ENCODE measurements at regions of chr1 and their contacts with region 1.

Region 1: DNA sequence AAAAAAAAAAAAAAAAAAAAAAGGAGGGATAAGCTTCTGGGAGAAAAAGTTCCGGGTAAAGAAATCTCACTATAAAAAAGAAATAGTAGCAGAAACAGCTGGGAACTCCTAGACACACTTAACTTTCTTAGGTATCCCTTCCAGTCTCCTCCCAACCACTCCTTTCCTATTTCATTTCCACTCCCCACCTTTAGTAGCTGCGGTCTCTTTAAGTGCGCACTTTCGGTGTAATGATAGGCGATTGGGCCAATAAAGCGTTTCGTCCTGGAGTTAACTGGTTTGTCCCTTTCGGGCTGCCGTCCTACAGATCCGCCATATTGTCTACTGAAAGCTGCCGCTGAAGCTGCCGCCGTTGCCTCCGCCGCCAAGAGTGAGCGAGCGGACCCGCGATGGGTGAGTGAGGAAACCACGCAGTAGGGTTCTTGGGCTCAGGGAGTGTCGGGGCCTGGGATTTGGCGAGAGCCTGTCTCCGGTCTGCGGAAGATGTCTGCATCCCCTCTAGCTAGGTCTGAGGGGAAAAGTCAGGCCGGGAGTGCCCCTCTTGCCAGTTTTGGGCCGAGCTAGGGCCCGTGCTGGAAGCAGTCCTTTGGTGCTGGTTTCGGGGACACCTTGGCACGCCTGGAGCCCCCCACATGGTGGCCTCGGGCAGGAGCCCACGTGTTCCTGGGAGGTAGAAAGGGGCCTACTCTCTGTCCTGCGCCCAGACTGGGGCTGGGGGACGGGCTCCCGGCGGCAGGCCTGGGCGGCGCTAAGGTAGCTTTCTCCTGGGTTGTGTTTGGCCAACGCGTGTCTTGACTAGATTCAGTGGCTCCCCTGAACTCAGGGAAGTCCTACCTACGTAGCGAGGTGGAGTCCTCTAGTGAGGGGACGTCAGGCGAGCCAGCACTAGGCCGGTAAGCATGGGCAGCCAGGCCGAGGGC is at the start of gene KPNA6:
- DNase-seq: peak; percentile 95
- ATAC-seq: peak; percentile 80
- H3K4me3 Mint-ChIP-seq: peak within 1 kb of the TSS; percentile 98
- H3K27ac Mint-ChIP-seq: peak within 1 kb of the TSS; percentile 98
- H3K4me1 Mint-ChIP-seq: peaks cover 40% of the 10 kb centered on the region
- H3K27me3 Mint-ChIP-seq: no peaks in the 10 kb centered on the region
- total RNA-seq, gene KPNA6: 65.7 to 67.2 TPM

Region 2: DNA sequence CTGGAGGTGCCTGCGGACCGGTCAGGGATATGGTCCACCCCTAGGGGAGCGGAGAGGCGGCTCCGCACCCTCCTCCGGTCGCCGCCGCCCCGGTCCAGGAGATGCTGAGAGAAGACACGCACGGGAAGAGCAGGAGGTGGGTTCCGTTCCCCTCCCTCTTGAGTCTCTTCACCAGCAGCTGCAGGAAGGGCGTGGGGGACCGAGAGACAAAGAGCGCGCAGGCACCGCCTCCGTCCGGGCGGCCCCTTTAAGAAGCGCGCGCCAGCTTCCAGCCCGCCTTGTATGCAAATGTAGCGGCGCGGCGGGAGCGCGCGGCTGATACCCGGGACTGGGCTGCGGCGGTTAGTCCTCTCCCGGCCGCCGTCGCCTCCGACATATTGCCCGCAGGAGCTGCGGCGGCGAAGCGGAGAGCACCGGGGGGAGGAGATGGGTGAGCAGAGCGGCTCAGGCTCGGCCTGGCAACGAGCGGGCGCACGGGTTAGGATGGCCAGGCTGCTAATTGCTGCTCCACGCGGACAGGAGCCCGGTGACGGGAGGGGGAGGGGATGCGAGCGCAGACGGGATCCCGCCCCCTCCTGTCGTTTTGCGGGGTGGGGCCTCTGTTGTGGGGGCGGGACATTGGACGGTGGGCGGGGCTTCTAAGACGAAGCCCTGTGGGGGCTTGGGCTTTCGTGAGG is 35.2 kb before region 1 on chr1 and contains the start of gene TMEM39B:
- CTCF ChIA-PET with region 1: interaction called, 21 read pairs
- POLR2A ChIA-PET with region 1: interaction called, 28 read pairs
- DNase-seq: peak; percentile 97
- ATAC-seq: peak; percentile 90
- H3K4me3 Mint-ChIP-seq: peak within 1 kb of the TSS; percentile 76
- H3K27ac Mint-ChIP-seq: peak within 1 kb of the TSS; percentile 87
- H3K4me1 Mint-ChIP-seq: peaks cover 38% of the 10 kb centered on the region
- H3K27me3 Mint-ChIP-seq: no peaks in the 10 kb centered on the region
- total RNA-seq, gene TMEM39B: 32.6 to 36.2 TPM

Region 3: GRCh38 chr1:32122151-32122550 is 14.1 kb after region 1 on chr1:
- CTCF ChIA-PET with region 1: interaction called, 16 read pairs
- POLR2A ChIA-PET with region 1: interaction called, 4 read pairs
- DNase-seq: no peak
- ATAC-seq: no peak
- H3K4me3 Mint-ChIP-seq: no peak overlapping the region
- H3K27ac Mint-ChIP-seq: peak overlapping the region; percentile 57
- H3K4me1 Mint-ChIP-seq: peaks cover 31% of the 10 kb centered on the region
- H3K27me3 Mint-ChIP-seq: no peaks in the 10 kb centered on the region

Region 4: GRCh38 chr1:32127409-32128198 is 19.6 kb after region 1 on chr1:
- CTCF ChIA-PET with region 1: interaction called, 16 read pairs
- POLR2A ChIA-PET with region 1: no interaction called
- DNase-seq: no peak
- ATAC-seq: no peak
- H3K4me3 Mint-ChIP-seq: no peak overlapping the region
- H3K27ac Mint-ChIP-seq: no peak overlapping the region
- H3K4me1 Mint-ChIP-seq: peaks cover 27% of the 10 kb centered on the region
- H3K27me3 Mint-ChIP-seq: no peaks in the 10 kb centered on the region